ENCODE measurements at regions of chr15 and their contacts with region 1.

Region 1: DNA sequence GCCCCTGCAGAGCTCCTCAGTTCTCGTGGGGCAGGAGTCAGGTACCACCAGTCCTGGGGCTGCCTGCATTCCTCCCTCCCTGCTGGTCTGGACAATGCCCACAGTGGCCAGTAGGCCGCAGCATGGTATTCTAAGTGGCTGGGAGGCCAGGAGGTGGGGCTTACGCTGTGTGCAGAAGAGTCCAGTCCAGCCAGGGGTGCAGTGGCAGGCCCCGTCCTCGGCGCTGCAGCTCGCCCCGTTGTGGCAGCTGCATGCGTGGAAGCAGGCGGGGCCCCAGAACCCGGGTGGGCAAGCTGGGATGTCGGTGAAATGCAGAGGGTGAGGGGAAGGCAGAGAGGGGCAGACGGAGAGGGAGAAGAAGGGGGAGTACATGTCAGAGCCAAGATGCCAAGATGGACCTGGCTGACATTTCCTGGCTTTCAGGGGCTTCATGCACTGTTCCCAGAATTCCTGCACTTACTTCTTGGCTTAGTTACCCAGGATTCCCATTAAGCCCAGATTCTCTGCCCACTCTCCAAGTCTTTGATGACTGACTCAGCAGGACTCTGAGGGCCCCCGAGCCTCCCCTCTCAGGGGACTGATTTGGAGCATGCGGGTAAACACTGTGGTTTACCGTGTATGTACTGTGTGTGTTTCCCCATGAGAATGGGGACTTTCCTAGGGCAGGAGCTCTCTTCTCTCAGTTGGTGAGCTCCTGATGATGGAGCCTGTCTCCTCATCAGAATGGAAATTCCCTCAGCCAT is 47.5 kb downstream of the RAB11A start:
- DNase-seq: peak; percentile 46 to 84 (median 78)
- ATAC-seq: peak; percentile 81 to 88
- H3K4me3 ChIP-seq: no peak overlapping the region
- H3K27ac ChIP-seq: no peak overlapping the region
- H3K4me1 ChIP-seq: peaks cover 2% of the 10 kb centered on the region
- H3K27me3 ChIP-seq: no peaks in the 10 kb centered on the region

Region 2: GRCh38 chr15:66188464-66188863 is 271.6 kb after region 1 on chr15:
- intact Hi-C with region 1: loop called in 1 of 4 experiments (anchors 10 kb)
- DNase-seq: no peak
- ATAC-seq: peak; percentile 21 to 25
- H3K4me3 ChIP-seq: no peak overlapping the region
- H3K27ac ChIP-seq: no peak overlapping the region
- H3K4me1 ChIP-seq: no peaks in the 10 kb centered on the region
- H3K27me3 ChIP-seq: no peaks in the 10 kb centered on the region

Region 3: GRCh38 chr15:66269326-66270038 is 352.6 kb after region 1 on chr15:
- intact Hi-C with region 1: loop called in 1 of 4 experiments (anchors 10 kb)
- DNase-seq: no peak
- ATAC-seq: peak in 1 of 2 donors; percentile 46
- H3K4me3 ChIP-seq: no peak overlapping the region
- H3K27ac ChIP-seq: no peak overlapping the region
- H3K4me1 ChIP-seq: no peaks in the 10 kb centered on the region
- H3K27me3 ChIP-seq: no peaks in the 10 kb centered on the region

Region 4: GRCh38 chr15:66293419-66294156 is 376.8 kb after region 1 on chr15 and contains the start of gene DIS3L:
- intact Hi-C with region 1: loop called in 1 of 4 experiments (anchors 10 kb)
- DNase-seq: peak; percentile 71 to 88 (median 84)
- ATAC-seq: peak; percentile 94
- H3K4me3 ChIP-seq: peak within 1 kb of the TSS; percentile 98
- H3K27ac ChIP-seq: peak within 1 kb of the TSS; percentile 99
- H3K4me1 ChIP-seq: no peaks in the 10 kb centered on the region
- H3K27me3 ChIP-seq: no peaks in the 10 kb centered on the region
- total RNA-seq, gene DIS3L: 37.7 to 45.2 (median 42.6) TPM